Activated CD4-positive, alpha-beta T cell treated with anti-CD3 and anti-CD28 coated beads, Interleukin-2, amount 10 ng/mL, durations not matched to agents 7 days and 5 days (primary cell): ENCODE measurements at regions of chr20 and their contacts with region 1.

Region 1: GRCh38 chr20:36461600-36462439 is 79.5 kb upstream of the MYL9 start:
- DNase-seq: peak; percentile 40
- H3K4me3 Mint-ChIP-seq: peak overlapping the region; percentile 94
- H3K27ac Mint-ChIP-seq: peak overlapping the region; percentile 92
- H3K4me1 Mint-ChIP-seq: peaks cover 56% of the 10 kb centered on the region
- H3K27me3 Mint-ChIP-seq: no peaks in the 10 kb centered on the region

Region 2: DNA sequence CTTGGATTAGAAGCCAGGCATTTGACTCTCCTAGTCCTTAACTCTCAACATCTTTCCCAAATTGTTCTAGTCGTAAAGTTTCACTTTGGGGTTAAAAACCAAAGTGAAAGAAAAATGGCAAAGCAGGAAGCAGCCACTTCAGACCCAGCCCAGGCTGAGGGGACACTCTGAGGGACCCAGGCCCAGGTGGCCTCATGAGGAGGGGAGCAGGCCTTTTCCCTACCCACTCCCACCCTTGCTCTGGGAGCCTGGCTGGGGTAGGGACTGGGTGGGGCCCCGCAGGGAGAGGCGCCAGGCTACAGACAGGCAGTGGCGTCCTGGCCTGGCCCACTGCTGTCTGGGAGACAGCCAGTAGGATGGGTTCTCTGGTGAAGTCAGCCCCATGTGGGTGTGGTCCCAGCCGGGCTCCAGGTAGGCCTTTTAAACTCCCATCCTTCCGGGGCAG is 10.8 kb after region 1 on chr20:
- CTCF ChIA-PET with region 1: interaction called, 12 read pairs
- POLR2A ChIA-PET with region 1: no interaction called
- DNase-seq: peak; percentile 54
- H3K4me3 Mint-ChIP-seq: peak overlapping the region; percentile 67
- H3K27ac Mint-ChIP-seq: peak overlapping the region; percentile 87
- H3K4me1 Mint-ChIP-seq: peaks cover 57% of the 10 kb centered on the region
- H3K27me3 Mint-ChIP-seq: no peaks in the 10 kb centered on the region